Activated naive CD8-positive, alpha-beta T cell treated with anti-CD3 and anti-CD28 coated beads, Interleukin-2, amount 10 ng/mL, durations not matched to agents 7 days and 5 days (primary cell): ENCODE measurements at regions of chr6 and their contacts with region 1.

Region 1: DNA sequence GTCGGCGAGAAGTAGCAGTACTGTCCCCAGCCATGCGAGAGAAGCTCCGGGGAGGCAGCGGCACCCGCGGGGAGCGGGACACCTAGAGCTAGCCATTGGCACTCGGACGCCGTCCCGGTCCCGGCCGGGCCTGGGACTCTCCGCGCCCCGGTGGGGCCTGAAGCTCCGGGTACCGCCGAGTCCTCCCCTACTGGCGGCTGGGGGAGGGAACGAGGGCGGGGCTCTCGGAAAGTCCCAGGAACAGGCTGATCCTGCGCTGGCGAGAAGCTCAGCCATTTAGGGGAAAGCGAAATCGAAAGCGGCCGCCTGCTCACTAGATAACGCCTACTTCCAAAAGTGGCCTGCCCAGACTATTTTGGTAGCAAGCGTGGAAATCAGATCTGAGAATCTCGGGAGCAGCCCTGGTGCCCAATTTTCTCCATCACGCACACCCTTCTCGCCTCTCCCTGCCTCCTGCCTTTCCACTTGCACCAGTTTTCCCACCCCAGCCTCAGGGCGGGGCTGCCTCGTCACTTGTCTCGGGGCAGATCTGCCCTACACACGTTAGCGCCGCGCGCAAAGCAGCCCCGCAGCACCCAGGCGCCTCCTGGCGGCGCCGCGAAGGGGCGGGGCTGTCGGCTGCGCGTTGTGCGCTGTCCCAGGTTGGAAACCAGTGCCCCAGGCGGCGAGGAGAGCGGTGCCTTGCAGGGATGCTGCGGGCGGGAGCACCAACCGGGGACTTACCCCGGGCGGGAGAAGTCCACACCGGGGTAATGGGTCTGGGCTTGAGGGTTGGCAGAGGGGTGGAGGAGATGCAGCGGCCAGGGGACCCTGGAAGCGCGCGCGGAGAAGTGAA is at the starts of genes PSMB9 and TAP1:
- DNase-seq: peak; percentile 96
- ATAC-seq: peak; percentile 86
- H3K4me3 Mint-ChIP-seq: peak within 1 kb of the TSS; percentile 98
- H3K27ac Mint-ChIP-seq: peak within 1 kb of the TSS; percentile 100
- H3K4me1 Mint-ChIP-seq: peaks cover 54% of the 10 kb centered on the region
- H3K27me3 Mint-ChIP-seq: no peaks in the 10 kb centered on the region
- total RNA-seq, gene PSMB9: 353 to 356 TPM
- total RNA-seq, gene TAP1: 315 to 323 TPM

Region 2: GRCh38 chr6:32868257-32868788 is 14.6 kb after region 1 on chr6:
- POLR2A ChIA-PET with region 1: interaction called, 65 read pairs
- DNase-seq: peak; percentile 81
- ATAC-seq: peak; percentile 57
- H3K4me3 Mint-ChIP-seq: no peak overlapping the region
- H3K27ac Mint-ChIP-seq: no peak overlapping the region
- H3K4me1 Mint-ChIP-seq: peaks cover 32% of the 10 kb centered on the region
- H3K27me3 Mint-ChIP-seq: peaks cover 4% of the 10 kb centered on the region

Region 3: GRCh38 chr6:32894080-32895005 is 40.6 kb after region 1 on chr6:
- POLR2A ChIA-PET with region 1: interaction called, 14 read pairs
- DNase-seq: peak; percentile 96
- ATAC-seq: peak; percentile 99
- H3K4me3 Mint-ChIP-seq: peak overlapping the region; percentile 99
- H3K27ac Mint-ChIP-seq: peak overlapping the region; percentile 96
- H3K4me1 Mint-ChIP-seq: peaks cover 28% of the 10 kb centered on the region
- H3K27me3 Mint-ChIP-seq: no peaks in the 10 kb centered on the region